Cardiac septum (tissue), 1 donor: ENCODE measurements at regions of chr3 and their contacts with region 1.

Region 1: DNA sequence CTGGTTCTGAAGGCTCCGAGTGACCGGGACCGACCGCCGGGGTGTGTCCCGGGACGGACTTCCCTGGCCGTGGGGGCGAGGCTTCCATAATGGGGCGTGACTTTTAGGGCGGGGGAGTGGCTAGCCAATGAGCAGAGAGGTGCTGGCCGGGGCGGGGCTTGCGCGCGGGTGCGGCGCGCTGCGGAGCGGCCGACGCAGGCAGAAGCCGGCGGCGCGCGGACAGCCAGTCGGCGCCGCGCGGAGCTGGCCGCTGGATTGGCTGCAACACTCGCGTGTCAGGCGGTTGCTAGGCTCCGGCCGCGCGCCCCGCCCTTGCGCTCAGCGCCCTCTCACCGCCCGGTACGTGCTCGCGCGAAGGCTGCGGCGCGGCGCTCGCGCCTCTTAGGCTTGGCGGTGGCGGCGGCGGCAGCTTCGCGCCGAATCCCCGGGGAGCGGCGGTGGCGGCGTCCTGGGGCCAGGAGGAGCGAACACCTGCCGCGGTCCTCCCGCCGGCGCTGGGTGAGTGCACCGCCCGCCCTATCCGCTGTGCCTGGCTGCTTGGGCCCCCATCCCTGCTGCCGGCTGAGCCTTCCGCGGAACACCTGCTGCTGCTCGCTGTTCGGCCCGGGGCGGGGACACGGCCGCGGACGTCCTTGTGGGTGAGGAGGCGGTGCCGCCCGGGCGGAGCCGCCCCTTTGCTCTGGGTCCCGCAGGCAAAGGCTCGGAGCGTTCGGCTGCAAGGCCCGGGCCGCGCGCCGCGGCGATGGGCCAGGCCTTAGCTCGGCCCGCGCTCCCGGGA is at the start of gene DAG1:
- DNase-seq: peak; percentile 99
- total RNA-seq, gene DAG1: 130 TPM

Region 2: DNA sequence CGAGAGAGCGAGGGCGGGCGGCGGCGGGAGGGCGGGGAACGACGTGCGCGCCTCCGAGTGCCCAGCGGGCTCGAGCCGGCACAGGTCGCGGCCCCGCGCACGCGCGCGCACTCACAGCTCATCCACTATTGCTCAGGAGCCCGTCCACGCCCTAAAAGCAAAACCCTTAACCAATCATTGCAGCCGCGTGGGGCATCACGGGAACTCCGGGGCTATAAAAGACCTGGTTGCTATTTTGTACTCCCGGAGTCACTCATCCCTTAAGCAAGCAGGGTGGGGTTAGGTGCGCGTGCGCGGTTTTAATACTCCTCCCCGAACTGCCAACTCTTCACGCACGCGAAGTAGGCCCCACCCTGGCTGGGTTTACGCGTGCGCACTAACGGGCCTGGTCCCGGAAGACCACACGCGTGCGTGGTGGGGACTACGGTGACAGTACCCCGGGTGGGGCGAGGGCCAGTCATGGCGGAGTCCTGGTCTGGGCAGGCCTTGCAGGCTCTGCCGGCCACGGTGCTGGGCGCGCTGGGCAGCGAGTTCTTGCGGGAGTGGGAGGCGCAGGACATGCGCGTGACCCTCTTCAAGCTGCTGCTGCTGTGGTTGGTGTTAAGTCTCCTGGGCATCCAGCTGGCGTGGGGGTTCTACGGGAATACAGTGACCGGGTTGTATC is 58.0 kb before region 1 on chr3 and contains the starts of genes RHOA and TCTA:
- intact Hi-C with region 1: loop called (anchors 2 kb)
- DNase-seq: peak; percentile 99
- total RNA-seq, gene RHOA: 340 TPM
- total RNA-seq, gene TCTA: 26.5 TPM

Region 3: GRCh38 chr3:49484471-49484870 is 14.3 kb after region 1 on chr3:
- intact Hi-C with region 1: loop called (anchors 2 kb)
- DNase-seq: no peak

Region 4: GRCh38 chr3:49519296-49519695 is 49.2 kb after region 1 on chr3:
- intact Hi-C with region 1: no loop called
- DNase-seq: no peak

Region 5: GRCh38 chr3:49539659-49540560 is 69.8 kb after region 1 on chr3:
- intact Hi-C with region 1: loop called (anchors 5 kb)
- DNase-seq: peak; percentile 98